ENCODE measurements at regions of chr6 and their contacts with region 1.

Region 1: GRCh38 chr6:156686995-156687788 is 90.0 kb upstream of the ARID1B start:
- H3K4me3 Mint-ChIP-seq: peak overlapping the region; percentile 94
- H3K27ac Mint-ChIP-seq: peak overlapping the region; percentile 92
- H3K4me1 Mint-ChIP-seq: peaks cover 41% of the 10 kb centered on the region
- H3K27me3 Mint-ChIP-seq: peaks cover 3% of the 10 kb centered on the region

Region 2: DNA sequence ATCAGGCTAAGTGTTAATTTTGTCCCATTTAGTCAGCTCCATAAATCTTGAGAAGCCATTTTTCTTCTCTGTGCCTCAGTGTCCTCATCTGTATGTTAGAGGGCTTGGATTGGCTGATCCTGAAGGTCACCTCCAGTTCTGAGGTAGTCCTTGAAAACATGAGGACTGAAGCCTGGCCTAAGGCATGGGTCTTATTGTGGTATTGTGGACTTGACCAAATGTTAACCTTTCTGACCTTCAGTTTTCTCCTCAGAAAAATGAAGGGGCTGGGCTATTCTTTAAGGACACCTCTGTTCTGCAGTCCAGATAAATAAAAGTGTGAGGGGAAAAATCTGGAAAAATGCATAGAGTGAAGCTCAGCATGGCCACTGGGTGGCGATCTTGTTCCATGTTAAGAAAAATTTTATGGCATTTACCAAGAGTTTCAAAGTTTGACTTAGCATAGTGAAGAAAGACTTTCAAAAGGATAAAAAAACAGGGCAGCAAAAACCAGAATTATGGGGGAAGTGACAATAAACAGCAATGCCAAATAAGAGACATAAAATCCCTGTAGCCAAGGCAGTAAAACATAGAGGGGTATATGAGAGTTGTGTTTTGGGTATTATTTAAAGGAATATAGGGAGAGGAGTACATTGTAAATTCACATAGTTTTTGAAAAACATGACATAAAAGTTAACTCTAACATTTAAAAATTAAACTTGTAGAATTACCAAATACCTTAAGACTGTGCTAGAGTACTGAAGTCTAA is 1359.7 kb before region 1 on chr6:
- intact Hi-C with region 1: loop called (anchors 10 kb)
- H3K4me3 Mint-ChIP-seq: no peak overlapping the region
- H3K27ac Mint-ChIP-seq: no peak overlapping the region
- H3K4me1 Mint-ChIP-seq: peaks cover 6% of the 10 kb centered on the region
- H3K27me3 Mint-ChIP-seq: no peaks in the 10 kb centered on the region

Region 3: DNA sequence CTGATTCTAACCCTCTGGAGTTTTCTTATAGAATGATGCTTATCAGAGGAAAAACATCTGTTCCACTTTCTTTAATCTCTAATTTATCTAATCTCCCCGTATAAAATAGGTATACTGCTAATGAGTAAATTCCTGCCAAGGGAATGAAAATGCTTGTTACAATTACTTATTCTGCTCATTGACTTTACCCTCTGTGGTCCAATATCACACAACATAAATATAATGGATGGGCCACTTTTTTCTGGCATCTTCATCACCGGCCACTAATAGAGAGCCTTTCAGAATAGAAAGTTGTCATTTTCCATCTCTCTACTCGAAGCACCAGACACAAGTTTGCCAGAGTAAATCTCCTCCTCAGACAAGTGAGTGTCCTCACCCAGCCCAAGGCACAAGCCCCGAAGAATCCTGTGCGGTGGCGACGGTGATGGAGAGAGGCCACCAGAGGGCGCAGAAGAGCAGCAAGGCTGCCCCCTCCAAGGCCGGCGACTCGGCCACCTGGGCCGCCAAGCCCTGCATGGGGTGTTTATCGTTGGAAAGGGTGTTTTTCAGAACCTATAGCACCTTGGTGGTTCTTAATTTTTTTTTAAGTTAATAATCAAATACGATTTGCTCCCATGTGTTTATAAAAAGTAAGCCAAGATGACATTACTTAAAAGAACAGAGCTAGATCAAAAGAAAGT is 122.9 kb before region 1 on chr6:
- intact Hi-C with region 1: loop called (anchors 10 kb)
- H3K4me3 Mint-ChIP-seq: no peak overlapping the region
- H3K27ac Mint-ChIP-seq: no peak overlapping the region
- H3K4me1 Mint-ChIP-seq: no peaks in the 10 kb centered on the region
- H3K27me3 Mint-ChIP-seq: no peaks in the 10 kb centered on the region

Region 4: GRCh38 chr6:156703719-156704118 is 16.5 kb after region 1 on chr6:
- intact Hi-C with region 1: no loop called
- H3K4me3 Mint-ChIP-seq: no peak overlapping the region
- H3K27ac Mint-ChIP-seq: no peak overlapping the region
- H3K4me1 Mint-ChIP-seq: peaks cover 9% of the 10 kb centered on the region
- H3K27me3 Mint-ChIP-seq: peaks cover 5% of the 10 kb centered on the region

Region 5: DNA sequence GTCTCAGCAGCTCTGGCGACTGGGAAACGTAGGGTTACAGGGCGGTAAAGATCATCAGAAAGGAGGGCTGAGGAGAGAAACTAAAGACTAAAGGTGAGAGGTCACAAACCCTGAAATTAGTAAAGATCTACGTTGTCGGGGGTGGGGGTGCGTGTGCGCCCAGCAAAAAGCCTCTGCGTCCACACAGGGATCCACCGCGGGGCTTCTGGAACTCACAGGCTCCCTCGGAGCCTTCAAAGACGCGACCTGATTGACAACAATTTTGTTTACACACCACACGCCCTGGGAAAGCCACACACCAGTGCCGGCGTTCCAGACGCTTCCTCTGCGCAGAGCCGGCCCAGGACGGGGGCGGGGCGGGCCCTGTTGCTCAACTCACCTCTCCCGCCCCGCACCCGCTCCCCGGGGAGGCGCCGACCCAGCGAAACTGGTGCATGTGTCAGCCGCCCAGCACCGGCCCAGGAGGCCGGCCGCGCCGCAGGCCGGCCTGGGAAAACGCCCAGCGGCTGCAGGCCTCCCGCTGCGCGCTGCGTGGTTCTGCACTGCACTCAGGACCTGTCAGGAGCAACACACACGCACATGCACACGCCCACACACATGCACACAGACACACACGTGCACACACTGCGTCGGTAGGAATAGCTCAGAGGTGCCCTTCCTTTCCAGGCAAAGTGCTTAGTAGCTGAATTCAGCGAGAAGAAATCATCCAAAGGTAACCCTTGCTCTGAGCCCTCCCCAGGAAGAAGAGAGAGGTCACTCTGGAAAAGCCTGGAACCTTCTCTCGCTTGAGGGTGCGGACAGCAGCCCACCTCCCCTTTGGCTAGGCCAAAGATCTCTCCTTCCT is 32.8 kb after region 1 on chr6:
- intact Hi-C with region 1: loop called (anchors 5 kb)
- H3K4me3 Mint-ChIP-seq: peak overlapping the region; percentile 65
- H3K27ac Mint-ChIP-seq: peak overlapping the region; percentile 81
- H3K4me1 Mint-ChIP-seq: peaks cover 30% of the 10 kb centered on the region
- H3K27me3 Mint-ChIP-seq: no peaks in the 10 kb centered on the region

Region 6: GRCh38 chr6:156776840-156777576 is 89.8 kb after region 1 on chr6 and contains the start of gene ARID1B:
- intact Hi-C with region 1: loop called (anchors 1 kb)
- H3K4me3 Mint-ChIP-seq: peak within 1 kb of the TSS; percentile 97
- H3K27ac Mint-ChIP-seq: peak within 1 kb of the TSS; percentile 97
- H3K4me1 Mint-ChIP-seq: peaks cover 26% of the 10 kb centered on the region
- H3K27me3 Mint-ChIP-seq: peaks cover 21% of the 10 kb centered on the region

Region 7: DNA sequence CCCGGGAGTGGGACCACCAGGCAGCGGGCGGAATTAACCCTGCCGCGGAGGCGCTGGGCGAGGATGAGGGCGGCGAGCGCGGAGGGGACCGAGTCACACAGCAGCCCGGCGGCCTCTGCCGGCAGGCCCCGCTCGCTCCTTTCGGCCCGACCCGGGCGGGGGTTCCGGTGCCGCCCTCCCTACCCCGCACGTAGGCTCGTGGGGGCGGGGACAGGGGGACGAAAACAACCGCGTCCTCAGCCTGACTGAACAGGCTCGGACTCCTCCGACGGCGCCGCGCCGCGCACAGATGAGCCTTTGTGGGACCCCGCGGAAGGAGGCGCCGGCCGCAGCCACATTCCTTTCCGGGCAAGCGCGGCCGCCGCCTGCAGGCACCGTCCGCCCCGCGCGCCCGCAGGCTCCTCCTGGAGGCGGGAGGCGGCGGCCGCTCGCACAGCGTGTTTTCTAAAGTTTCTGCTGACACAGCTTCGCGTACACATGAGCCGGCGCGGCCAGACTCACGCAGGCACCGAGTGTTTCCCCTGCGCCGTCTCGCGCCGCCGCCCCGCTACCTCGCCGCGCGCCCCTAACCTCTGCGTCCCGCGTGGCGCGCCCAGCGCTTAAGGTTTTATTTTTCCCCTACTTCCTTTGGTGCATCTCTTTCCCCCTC is 334.3 kb after region 1 on chr6:
- intact Hi-C with region 1: loop called (anchors 10 kb)
- H3K4me3 Mint-ChIP-seq: peak overlapping the region; percentile 87
- H3K27ac Mint-ChIP-seq: peak overlapping the region; percentile 99
- H3K4me1 Mint-ChIP-seq: peaks cover 28% of the 10 kb centered on the region
- H3K27me3 Mint-ChIP-seq: no peaks in the 10 kb centered on the region

Measured in dendritic cell treated with granulocyte-macrophage colony-stimulating factor and Interleukin-4, amounts not matched to agents 40 ng/mL and 50 ng/mL, for 4 days (primary cell).